Mammary epithelial cell (primary cell): ENCODE measurements at regions of chr3 and their contacts with region 1.

Region 1: GRCh38 chr3:47250309-47251060 is 32.1 kb downstream of the KIF9 start:
- DNase-seq: peak; percentile 20
- H3K4me3 ChIP-seq: no peak overlapping the region
- H3K27ac ChIP-seq: no peak overlapping the region
- H3K4me1 ChIP-seq: no peaks in the 10 kb centered on the region
- H3K27me3 ChIP-seq: no peaks in the 10 kb centered on the region
- CTCF ChIP-seq: peak; percentile 26 to 53

Region 2: GRCh38 chr3:47176582-47176981 is 73.9 kb before region 1 on chr3:
- CTCF ChIA-PET with region 1: no interaction called
- dilution Hi-C with region 1: loop called (anchors 5 kb)
- in situ Hi-C with region 1: no loop called
- intact Hi-C with region 1: no loop called
- DNase-seq: no peak
- H3K4me3 ChIP-seq: no peak overlapping the region
- H3K27ac ChIP-seq: no peak overlapping the region
- H3K4me1 ChIP-seq: no peaks in the 10 kb centered on the region
- H3K27me3 ChIP-seq: no peaks in the 10 kb centered on the region
- CTCF ChIP-seq: no peak

Region 3: GRCh38 chr3:47193871-47194859 is 56.3 kb before region 1 on chr3:
- CTCF ChIA-PET with region 1: no interaction called
- dilution Hi-C with region 1: no loop called
- in situ Hi-C with region 1: no loop called
- intact Hi-C with region 1: no loop called
- DNase-seq: peak; percentile 1
- H3K4me3 ChIP-seq: no peak overlapping the region
- H3K27ac ChIP-seq: no peak overlapping the region
- H3K4me1 ChIP-seq: no peaks in the 10 kb centered on the region
- H3K27me3 ChIP-seq: no peaks in the 10 kb centered on the region
- CTCF ChIP-seq: no peak

Region 4: GRCh38 chr3:47370887-47371697 is 120.6 kb after region 1 on chr3:
- CTCF ChIA-PET with region 1: no interaction called
- dilution Hi-C with region 1: no loop called
- in situ Hi-C with region 1: no loop called
- intact Hi-C with region 1: loop called (anchors 2 kb)
- DNase-seq: no peak
- H3K4me3 ChIP-seq: no peak overlapping the region
- H3K27ac ChIP-seq: no peak overlapping the region
- H3K4me1 ChIP-seq: no peaks in the 10 kb centered on the region
- H3K27me3 ChIP-seq: no peaks in the 10 kb centered on the region
- CTCF ChIP-seq: peak in 1 of 2 donors; percentile 37